Mammary epithelial cell (primary cell): ENCODE measurements at regions of chr3 and their contacts with region 1.

Region 1: GRCh38 chr3:25664810-25665314 is at the start of gene TOP2B:
- DNase-seq: peak; percentile 93
- H3K4me3 ChIP-seq: peak within 1 kb of the TSS; percentile 90 to 97 (median 93)
- H3K27ac ChIP-seq: peak within 1 kb of the TSS; percentile 82
- H3K4me1 ChIP-seq: peaks cover 11% of the 10 kb centered on the region
- H3K27me3 ChIP-seq: no peaks in the 10 kb centered on the region
- CTCF ChIP-seq: no peak
- total RNA-seq, gene TOP2B: 46.3 to 72.4 TPM

Region 2: DNA sequence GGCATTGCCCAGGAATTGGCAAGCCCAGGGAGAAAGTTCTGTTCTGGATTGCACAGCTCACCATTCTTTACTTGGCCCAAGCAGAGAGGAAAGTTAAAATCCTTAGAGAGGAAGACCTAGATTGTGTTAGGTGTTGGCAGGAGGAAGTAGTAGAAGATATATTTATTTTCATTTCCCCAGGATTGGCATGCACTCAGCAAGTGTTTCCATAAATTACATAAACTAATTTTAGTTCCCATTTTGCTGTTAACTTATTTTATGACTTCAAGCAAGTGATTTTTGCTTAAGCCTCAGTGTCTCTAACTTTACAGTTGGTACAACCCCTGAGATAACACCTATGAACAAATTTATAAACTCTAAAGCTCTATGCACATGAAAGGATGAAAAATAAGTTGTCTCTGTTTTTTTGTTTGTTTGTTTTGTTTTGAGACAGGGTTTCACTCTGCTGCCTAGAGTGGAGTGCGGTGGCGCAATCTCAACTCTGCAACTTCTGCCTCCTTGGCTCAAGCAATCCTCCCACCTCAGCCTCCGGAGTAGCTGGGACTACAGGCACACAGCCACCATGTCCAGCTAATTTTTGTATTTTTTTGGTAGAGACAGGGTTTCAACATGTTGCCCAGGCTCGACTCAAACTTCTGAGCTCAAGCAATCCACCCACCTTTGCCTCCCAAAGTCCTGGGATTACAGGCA is 31.0 kb after region 1 on chr3:
- CTCF ChIA-PET with region 1: no interaction called
- dilution Hi-C with region 1: no loop called
- in situ Hi-C with region 1: no loop called
- intact Hi-C with region 1: no loop called
- DNase-seq: no peak
- H3K4me3 ChIP-seq: no peak overlapping the region
- H3K27ac ChIP-seq: no peak overlapping the region
- H3K4me1 ChIP-seq: no peaks in the 10 kb centered on the region
- H3K27me3 ChIP-seq: no peaks in the 10 kb centered on the region
- CTCF ChIP-seq: no peak

Region 3: DNA sequence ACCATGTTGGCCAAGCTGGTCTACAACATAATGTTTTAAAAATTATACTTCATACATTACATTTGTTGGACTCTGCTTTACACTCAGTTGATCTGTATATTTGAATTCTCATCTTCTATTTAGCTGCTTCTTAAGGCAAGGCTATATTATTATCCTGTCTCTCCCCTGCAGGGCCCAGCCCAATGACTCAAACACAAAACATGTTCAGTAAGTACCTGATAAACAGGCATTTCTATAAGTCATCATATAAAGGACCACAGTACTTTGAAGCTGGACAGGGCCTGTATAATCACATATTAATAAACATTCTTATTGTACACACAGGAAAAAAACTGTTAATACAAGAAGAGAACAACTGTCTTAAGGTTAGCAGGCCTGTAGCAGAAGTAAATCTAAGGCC is 82.2 kb after region 1 on chr3:
- CTCF ChIA-PET with region 1: no interaction called
- dilution Hi-C with region 1: no loop called
- in situ Hi-C with region 1: no loop called
- intact Hi-C with region 1: loop called (anchors 10 kb)
- DNase-seq: peak; percentile 65
- H3K4me3 ChIP-seq: no peak overlapping the region
- H3K27ac ChIP-seq: no peak overlapping the region
- H3K4me1 ChIP-seq: peaks cover 10% of the 10 kb centered on the region
- H3K27me3 ChIP-seq: no peaks in the 10 kb centered on the region
- CTCF ChIP-seq: no peak

Region 4: GRCh38 chr3:25782938-25783660 is 118.2 kb after region 1 on chr3 and contains the start of gene NGLY1:
- CTCF ChIA-PET with region 1: no interaction called
- dilution Hi-C with region 1: no loop called
- in situ Hi-C with region 1: no loop called
- intact Hi-C with region 1: loop called (anchors 2 kb)
- DNase-seq: peak; percentile 77
- H3K4me3 ChIP-seq: peak within 1 kb of the TSS; percentile 84 to 95 (median 95)
- H3K27ac ChIP-seq: peak within 1 kb of the TSS; percentile 66
- H3K4me1 ChIP-seq: peaks cover 15% of the 10 kb centered on the region
- H3K27me3 ChIP-seq: no peaks in the 10 kb centered on the region
- CTCF ChIP-seq: no peak
- total RNA-seq, gene NGLY1: 23.3 to 30.9 TPM

Region 5: GRCh38 chr3:25789596-25790556 is 125.0 kb after region 1 on chr3 and contains the start of gene OXSM:
- CTCF ChIA-PET with region 1: no interaction called
- dilution Hi-C with region 1: no loop called
- in situ Hi-C with region 1: no loop called
- intact Hi-C with region 1: loop called (anchors 1 kb)
- DNase-seq: peak; percentile 87
- H3K4me3 ChIP-seq: peak within 1 kb of the TSS; percentile 77 to 84 (median 82)
- H3K27ac ChIP-seq: peak within 1 kb of the TSS; percentile 80
- H3K4me1 ChIP-seq: peaks cover 13% of the 10 kb centered on the region
- H3K27me3 ChIP-seq: no peaks in the 10 kb centered on the region
- CTCF ChIP-seq: no peak
- total RNA-seq, gene OXSM: 11.5 to 12.2 TPM

Region 6: DNA sequence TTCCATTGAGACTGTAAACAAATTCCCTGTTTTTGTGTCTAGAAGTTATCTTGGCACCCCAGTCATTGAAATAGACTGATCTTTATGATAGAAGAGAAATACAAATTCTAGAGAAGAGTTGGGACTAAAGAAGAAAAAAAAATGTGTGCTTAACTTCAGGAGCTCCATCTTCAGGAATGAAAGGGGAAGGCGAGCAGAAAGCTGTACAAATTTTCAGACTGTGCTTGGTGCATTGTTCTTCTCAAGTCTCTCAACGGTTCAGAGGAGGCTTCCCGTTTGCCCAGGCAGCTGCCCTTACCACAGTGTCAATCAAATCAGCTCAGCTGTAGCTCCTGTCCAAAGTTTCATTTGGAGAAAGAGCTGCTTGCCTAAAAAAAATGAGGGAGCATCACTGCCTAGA is 166.7 kb after region 1 on chr3:
- CTCF ChIA-PET with region 1: no interaction called
- dilution Hi-C with region 1: no loop called
- in situ Hi-C with region 1: no loop called
- intact Hi-C with region 1: loop called (anchors 5 kb)
- DNase-seq: peak; percentile 12
- H3K4me3 ChIP-seq: no peak overlapping the region
- H3K27ac ChIP-seq: no peak overlapping the region
- H3K4me1 ChIP-seq: no peaks in the 10 kb centered on the region
- H3K27me3 ChIP-seq: no peaks in the 10 kb centered on the region
- CTCF ChIP-seq: peak; percentile 36 to 53

Region 7: GRCh38 chr3:25856902-25857518 is 192.1 kb after region 1 on chr3:
- CTCF ChIA-PET with region 1: no interaction called
- dilution Hi-C with region 1: no loop called
- in situ Hi-C with region 1: loop called in 1 of 2 experiments (anchors 25 kb)
- intact Hi-C with region 1: loop called (anchors 5 kb)
- DNase-seq: peak; percentile 12
- H3K4me3 ChIP-seq: no peak overlapping the region
- H3K27ac ChIP-seq: no peak overlapping the region
- H3K4me1 ChIP-seq: peaks cover 4% of the 10 kb centered on the region
- H3K27me3 ChIP-seq: no peaks in the 10 kb centered on the region
- CTCF ChIP-seq: peak; percentile 65 to 83